Calu3 (cell line): ENCODE measurements at regions of chr2 and their contacts with region 1.

Region 1: DNA sequence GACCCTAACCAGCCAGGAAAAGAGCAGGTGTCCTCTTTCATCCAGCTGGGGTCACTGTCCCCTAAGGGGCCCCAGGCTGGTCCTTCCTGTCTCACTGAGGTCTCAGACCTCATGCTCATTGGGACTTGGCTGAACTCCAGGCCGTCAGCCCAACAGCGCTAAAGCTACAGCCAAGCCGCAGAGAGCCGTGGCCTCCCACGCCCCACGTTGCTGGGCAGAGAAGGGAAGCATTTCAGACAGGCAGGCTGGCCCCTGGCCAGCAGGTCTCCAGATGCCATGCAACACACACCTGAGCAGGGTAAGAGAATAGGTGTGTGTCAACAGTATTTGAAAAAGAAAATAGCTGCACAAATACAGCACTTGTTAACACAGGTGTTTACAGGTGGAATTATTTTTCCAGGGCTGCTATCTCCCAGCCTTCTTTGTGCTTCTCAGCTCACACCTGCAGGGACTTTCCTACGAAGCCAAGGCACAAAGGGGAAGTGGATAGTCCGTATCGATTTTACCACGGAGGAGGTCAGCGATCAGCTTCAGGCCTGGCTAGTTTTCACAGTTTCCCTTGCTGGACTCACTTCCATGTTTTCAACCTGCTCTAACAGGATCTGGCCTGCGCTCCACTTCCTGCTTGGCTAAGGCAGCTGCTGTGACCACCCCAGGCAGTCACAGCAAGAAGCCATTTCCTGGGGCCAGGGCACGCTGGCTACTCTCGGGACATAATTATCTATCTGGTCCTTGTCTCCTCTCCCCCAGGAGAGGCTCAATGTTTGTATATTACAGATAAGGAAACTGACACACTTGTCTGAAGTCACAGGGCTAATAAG is 156.1 kb upstream of the ID2 start:
- DNase-seq: peak; percentile 93
- H3K4me3 Mint-ChIP-seq: peak overlapping the region; percentile 53
- H3K27ac Mint-ChIP-seq: peak overlapping the region; percentile 72
- H3K4me1 Mint-ChIP-seq: peaks cover 54% of the 10 kb centered on the region
- H3K27me3 Mint-ChIP-seq: no peaks in the 10 kb centered on the region
- CTCF ChIP-seq: peak; percentile 32

Region 2: GRCh38 chr2:7835693-7836680 is 689.8 kb before region 1 on chr2:
- CTCF ChIA-PET with region 1: no interaction called
- intact Hi-C with region 1: no loop called
- DNase-seq: no peak
- H3K4me3 Mint-ChIP-seq: no peak overlapping the region
- H3K27ac Mint-ChIP-seq: no peak overlapping the region
- H3K4me1 Mint-ChIP-seq: peaks cover 39% of the 10 kb centered on the region
- H3K27me3 Mint-ChIP-seq: no peaks in the 10 kb centered on the region
- CTCF ChIP-seq: no peak

Region 3: DNA sequence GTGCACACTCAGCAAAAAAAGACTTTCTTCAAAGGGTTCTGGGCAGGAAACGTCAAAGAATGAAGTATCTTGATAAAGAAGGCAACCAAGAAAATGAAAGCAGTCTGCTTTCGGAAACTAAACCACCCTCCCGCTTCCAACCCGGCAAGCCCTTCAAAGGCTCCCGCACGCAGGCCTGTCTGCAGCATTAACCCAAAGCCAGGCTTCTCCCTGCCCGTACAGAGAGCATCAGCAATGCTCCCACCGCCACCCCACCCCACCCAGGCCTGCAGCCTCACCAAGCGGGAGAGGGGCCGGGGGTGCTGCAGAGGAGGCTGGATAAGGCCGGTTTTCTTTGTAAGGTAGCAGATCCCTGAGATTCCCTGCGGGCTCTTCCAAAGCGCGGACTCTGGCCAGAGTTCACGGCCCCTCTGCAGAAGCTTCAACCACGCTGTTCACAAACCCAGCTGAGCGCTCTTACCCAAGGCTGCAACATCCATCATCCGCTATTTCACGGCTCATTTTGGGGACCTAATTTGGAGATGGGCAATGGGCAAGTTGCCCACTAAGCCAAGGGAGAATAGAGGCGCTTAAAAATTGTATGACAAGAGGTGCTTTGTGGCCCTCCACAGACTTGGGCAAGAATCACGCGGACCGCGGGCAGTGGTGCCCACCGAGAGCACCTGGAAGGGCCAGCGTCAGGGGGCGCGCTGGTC is 69.5 kb before region 1 on chr2:
- CTCF ChIA-PET with region 1: no interaction called
- intact Hi-C with region 1: loop called (anchors 5 kb)
- DNase-seq: no peak
- H3K4me3 Mint-ChIP-seq: peak overlapping the region; percentile 61
- H3K27ac Mint-ChIP-seq: no peak overlapping the region
- H3K4me1 Mint-ChIP-seq: peaks cover 47% of the 10 kb centered on the region
- H3K27me3 Mint-ChIP-seq: no peaks in the 10 kb centered on the region
- CTCF ChIP-seq: no peak

Region 4: GRCh38 chr2:8477552-8478470 is 48.0 kb before region 1 on chr2:
- CTCF ChIA-PET with region 1: interaction called, 5 read pairs
- intact Hi-C with region 1: loop called (anchors 2 kb)
- DNase-seq: no peak
- H3K4me3 Mint-ChIP-seq: no peak overlapping the region
- H3K27ac Mint-ChIP-seq: peak overlapping the region; percentile 86
- H3K4me1 Mint-ChIP-seq: peaks cover 77% of the 10 kb centered on the region
- H3K27me3 Mint-ChIP-seq: no peaks in the 10 kb centered on the region
- CTCF ChIP-seq: no peak

Region 5: DNA sequence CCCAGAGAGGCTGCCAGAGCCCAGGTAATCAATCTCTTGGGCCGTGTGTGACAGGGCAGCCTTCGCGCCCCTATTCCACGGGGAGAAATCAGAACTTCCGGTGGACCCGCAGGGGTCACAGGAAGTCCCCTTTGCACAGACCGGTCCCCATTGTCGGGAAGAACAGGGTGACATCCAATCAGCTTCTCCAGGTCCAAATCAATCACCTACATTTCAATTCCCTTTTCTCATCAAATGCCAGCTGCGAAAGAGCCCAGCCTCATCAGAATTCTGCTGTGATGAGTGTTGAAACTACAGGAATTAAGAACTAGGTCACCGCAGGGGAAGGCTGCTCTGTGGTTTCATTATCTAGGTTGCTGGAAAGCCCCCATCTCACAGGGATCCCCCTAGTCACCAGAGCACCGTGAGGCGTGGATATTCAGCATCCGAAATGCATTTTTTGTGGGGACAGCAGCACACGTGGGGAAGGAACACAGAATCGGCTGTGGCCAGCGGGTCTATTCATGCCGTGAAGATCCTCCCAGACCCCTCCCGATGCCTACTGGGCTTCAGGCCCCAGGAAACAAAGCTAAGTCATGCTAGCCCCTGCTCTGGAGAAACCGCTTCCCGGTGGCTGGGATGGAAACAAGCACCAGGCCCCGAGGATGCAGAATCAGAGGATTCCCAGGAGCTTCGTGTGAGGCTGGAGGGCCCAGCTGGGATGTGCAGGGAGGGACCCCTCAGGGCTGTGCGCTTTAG is 37.6 kb before region 1 on chr2:
- CTCF ChIA-PET with region 1: no interaction called
- intact Hi-C with region 1: loop called (anchors 2 kb)
- DNase-seq: no peak
- H3K4me3 Mint-ChIP-seq: no peak overlapping the region
- H3K27ac Mint-ChIP-seq: no peak overlapping the region
- H3K4me1 Mint-ChIP-seq: peaks cover 20% of the 10 kb centered on the region
- H3K27me3 Mint-ChIP-seq: no peaks in the 10 kb centered on the region
- CTCF ChIP-seq: no peak

Region 6: GRCh38 chr2:8539743-8540551 is 14.2 kb after region 1 on chr2:
- CTCF ChIA-PET with region 1: interaction called, 10 read pairs
- intact Hi-C with region 1: no loop called
- DNase-seq: peak; percentile 79
- H3K4me3 Mint-ChIP-seq: peak overlapping the region; percentile 7
- H3K27ac Mint-ChIP-seq: peak overlapping the region; percentile 78
- H3K4me1 Mint-ChIP-seq: peaks cover 27% of the 10 kb centered on the region
- H3K27me3 Mint-ChIP-seq: no peaks in the 10 kb centered on the region
- CTCF ChIP-seq: no peak

Region 7: DNA sequence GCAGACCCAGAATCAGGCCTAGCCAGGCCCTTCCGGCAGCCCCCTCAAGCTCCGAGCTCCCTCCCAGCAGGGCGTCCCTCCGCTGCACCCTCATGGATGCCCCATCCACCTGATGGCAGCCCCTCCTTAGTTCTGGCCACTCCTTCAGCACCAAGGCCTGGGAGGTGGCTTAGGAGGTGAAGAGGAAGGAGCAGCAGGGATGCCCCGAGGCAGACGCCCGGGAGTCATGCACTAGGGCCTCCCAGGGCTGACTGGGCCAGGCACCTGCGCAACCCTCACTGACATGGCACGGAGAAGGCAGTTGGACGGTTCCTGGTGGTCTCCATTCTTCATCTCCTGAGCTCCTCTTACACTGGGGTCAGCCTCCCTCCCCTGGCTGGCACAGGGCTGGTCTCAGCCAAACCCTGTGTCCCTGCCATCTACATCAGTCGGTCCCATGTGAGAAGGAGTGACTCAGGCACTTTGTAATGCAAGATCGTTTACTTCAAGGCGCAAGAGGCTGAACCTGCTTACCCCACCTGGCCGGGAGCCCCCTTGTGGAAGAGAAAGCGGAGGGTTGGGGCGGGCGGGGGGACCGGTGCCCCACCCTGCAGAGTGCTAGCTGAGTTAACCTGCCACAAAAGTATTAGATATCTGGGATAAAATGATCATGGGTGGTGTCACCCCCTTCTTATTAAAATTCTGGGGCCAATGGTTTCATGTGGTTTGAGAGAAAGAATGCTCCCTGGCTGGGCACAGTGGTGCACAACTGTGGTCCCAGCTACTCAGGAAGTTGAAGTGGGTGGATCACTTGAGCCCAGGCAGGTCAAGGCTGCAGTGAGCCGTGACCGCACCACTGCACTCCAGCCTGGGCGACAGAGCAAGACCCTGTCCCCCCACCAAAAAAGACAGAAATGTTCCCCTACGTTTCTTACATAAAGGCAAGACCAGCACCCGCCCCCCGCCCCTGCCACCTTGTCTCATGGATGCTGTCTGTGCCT is 102.7 kb after region 1 on chr2:
- CTCF ChIA-PET with region 1: no interaction called
- intact Hi-C with region 1: loop called (anchors 5 kb)
- DNase-seq: peak; percentile 68
- H3K4me3 Mint-ChIP-seq: peak overlapping the region; percentile 52
- H3K27ac Mint-ChIP-seq: peak overlapping the region; percentile 60
- H3K4me1 Mint-ChIP-seq: peaks cover 56% of the 10 kb centered on the region
- H3K27me3 Mint-ChIP-seq: no peaks in the 10 kb centered on the region
- CTCF ChIP-seq: peak; percentile 48